Spleen (tissue), 13 donors: ENCODE measurements at regions of chr15 and their contacts with region 1.

Region 1: GRCh38 chr15:98421419-98422129 is 226.8 kb upstream of the IGF1R start:
- DNase-seq: peak; percentile 89
- H3K4me3 ChIP-seq: peak overlapping the region in 3 of 8 donors; percentile 10 to 50 (median 19)
- H3K27ac ChIP-seq: no peak overlapping the region
- H3K4me1 ChIP-seq: peaks cover 6 to 18% (median 15%) of the 10 kb centered on the region in 6 donors
- H3K27me3 ChIP-seq: peaks cover 0 to 83% (median 26%) of the 10 kb centered on the region in 7 donors
- CTCF ChIP-seq: peak; percentile 79 to 97 (median 96)
- POLR2A ChIP-seq: no peak

Region 2: DNA sequence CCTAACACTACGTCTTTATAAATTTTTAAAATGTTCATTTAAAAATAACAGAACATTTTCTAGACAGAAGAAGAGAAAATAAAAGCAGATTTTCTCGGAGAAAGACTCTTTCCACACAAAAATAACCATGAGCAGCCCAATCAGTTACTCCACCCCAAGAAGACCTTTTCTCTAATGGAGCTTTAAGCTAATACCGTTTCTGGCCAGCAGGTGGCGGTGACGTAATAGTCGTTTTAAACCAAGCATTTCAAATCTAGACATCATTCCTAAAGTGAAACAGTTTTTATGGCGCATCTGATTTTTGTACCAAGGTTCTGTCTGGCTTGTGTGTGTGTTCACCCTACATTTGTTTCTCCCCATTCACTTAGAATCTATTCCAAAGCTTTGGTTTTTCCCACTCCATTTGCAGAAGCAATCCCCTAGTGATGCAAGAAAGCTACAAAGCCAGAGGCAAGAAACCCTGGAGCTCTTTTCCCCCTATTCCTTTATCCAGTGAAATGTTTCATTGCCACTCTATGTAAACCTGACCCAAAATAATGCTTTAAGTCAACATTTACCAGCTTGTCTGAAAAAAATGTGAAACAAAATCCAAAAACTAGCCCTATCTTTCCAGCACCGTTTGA is 109.9 kb before region 1 on chr15:
- intact Hi-C with region 1: loop called (anchors 5 kb)
- DNase-seq: peak; percentile 77
- H3K4me3 ChIP-seq: no peak overlapping the region
- H3K27ac ChIP-seq: no peak overlapping the region
- H3K4me1 ChIP-seq: peaks cover 0 to 5% (median 0%) of the 10 kb centered on the region in 6 donors
- H3K27me3 ChIP-seq: peaks cover 0 to 17% (median 0%) of the 10 kb centered on the region in 7 donors
- CTCF ChIP-seq: peak; percentile 53 to 84 (median 76)
- POLR2A ChIP-seq: no peak